ENCODE measurements at regions of chr6 and their contacts with region 1.

Region 1: GRCh38 chr6:168126566-168127383 is 47.8 kb upstream of the FRMD1 start:
- DNase-seq: no peak
- ATAC-seq: no peak

Region 2: DNA sequence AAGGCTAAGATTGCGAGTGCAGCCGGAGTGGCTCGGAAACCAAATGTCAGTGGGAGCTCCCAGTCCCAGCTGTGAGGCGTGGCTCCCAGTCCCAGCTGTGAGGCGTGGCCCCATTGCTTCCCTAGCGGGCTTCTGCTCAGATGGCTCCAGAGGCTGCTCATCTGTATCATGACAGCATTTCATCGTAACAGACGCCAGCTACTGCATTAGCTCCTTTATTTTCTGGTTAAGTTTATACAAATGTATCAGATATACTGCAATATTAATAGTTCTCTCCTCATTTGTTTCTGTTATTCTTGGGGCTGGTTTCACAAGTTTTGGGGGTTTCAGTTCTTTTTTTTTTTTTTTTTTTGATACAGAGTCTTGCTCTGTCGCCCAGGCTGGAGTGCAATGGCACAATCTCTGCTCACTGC is 1924.4 kb before region 1 on chr6:
- intact Hi-C with region 1: loop called (anchors 5 kb)
- DNase-seq: no peak
- ATAC-seq: peak; percentile 50

Region 3: DNA sequence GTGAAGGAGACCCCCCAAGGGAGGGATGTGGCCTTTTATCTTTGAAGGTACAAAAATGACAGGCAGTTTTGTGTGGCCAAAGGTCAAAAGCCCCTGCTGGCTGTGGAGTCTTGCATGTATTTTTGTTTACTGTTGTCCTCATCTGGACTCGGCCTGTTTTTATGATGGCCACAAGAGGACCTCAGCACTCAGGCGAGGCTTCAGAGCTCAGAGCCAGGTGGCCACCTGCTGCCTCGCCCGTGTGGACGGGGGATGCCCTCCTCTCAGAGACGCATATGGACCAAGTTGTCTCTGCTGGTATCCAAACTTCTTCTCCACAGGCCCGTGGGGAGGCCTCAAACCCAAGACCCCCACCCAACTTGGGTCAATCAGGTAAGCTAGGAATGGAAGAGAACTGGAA is 74.6 kb after region 1 on chr6:
- intact Hi-C with region 1: no loop called
- DNase-seq: no peak
- ATAC-seq: no peak